Dorsolateral prefrontal cortex (tissue), 120 donors: ENCODE measurements at regions of chr10 and their contacts with region 1.

Region 1: GRCh38 chr10:100185364-100186252 is at the start of gene ERLIN1:
- DNase-seq: peak; percentile 75 to 94 (median 87)
- H3K4me3 ChIP-seq: peak within 1 kb of the TSS; percentile 61 to 100 (median 93)
- H3K27ac ChIP-seq: peak within 1 kb of the TSS in 57 of 59 donors; percentile 6 to 92 (median 78)
- H3K27me3 ChIP-seq: no peaks in the 10 kb centered on the region
- CTCF ChIP-seq: peak in 29 of 56 donors; percentile 5 to 56 (median 26)
- total RNA-seq, gene ERLIN1: 6.9 to 17.3 (median 10.6) TPM

Region 2: GRCh38 chr10:100229819-100230422 is 44.3 kb after region 1 on chr10:
- intact Hi-C with region 1: loop called in 1 of 2 experiments (anchors 1 kb)
- DNase-seq: no peak
- H3K4me3 ChIP-seq: peak overlapping the region; percentile 61 to 99 (median 90)
- H3K27ac ChIP-seq: peak overlapping the region in 56 of 59 donors; percentile 6 to 90 (median 75)
- H3K27me3 ChIP-seq: no peaks in the 10 kb centered on the region
- CTCF ChIP-seq: peak in 4 of 56 donors; percentile 0 to 4 (median 2)

Region 3: DNA sequence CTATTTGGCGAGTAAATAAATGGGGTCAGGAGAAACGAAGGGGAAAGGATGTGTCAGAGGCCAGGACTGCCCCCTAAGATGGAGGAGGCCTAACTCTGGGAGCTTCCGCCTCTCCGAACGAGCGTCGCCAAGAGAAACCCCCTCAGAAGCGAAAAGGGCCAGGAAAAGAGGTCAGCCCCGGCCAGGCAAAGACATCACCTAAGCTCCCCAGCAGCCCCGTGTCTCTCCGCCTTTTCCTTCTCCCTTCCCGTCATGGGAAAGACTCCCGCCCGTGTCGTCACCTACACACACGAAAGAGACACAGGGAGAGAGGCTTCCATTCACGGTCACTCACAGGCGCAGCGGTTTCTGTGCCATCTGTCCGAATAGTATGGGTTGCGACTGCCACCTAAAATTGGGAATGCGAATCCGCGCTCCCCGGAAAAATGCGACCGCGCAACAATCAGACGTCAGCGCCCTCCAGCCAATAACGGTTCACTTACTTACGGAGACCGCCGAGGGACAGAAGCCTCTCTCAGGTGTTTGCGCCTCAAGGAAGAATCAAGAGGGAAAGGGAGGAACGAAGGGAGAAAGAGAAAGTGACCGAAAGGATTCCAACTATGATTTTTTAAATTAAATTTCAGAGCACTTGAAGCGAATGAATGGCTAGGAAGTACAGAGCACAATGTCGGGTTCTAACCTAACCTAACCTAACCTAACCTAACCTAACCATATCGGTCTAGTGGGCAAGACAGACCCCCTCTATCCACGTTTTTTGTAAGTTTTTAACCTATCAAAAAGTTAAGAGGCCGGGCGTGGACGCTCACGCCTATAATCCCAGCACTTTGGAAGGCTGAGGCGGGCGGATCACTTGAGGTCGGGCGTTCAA is 81.9 kb after region 1 on chr10 and contains the start of gene CWF19L1:
- intact Hi-C with region 1: loop called (anchors 5 to 10 kb)
- DNase-seq: peak; percentile 75 to 92 (median 87)
- H3K4me3 ChIP-seq: peak within 1 kb of the TSS; percentile 67 to 100 (median 96)
- H3K27ac ChIP-seq: peak within 1 kb of the TSS in 56 of 59 donors; percentile 32 to 93 (median 74)
- H3K27me3 ChIP-seq: no peaks in the 10 kb centered on the region
- CTCF ChIP-seq: peak in 23 of 56 donors; percentile 8 to 48 (median 21)
- total RNA-seq, gene CWF19L1: 15.0 to 36.9 (median 24.6) TPM

Region 4: DNA sequence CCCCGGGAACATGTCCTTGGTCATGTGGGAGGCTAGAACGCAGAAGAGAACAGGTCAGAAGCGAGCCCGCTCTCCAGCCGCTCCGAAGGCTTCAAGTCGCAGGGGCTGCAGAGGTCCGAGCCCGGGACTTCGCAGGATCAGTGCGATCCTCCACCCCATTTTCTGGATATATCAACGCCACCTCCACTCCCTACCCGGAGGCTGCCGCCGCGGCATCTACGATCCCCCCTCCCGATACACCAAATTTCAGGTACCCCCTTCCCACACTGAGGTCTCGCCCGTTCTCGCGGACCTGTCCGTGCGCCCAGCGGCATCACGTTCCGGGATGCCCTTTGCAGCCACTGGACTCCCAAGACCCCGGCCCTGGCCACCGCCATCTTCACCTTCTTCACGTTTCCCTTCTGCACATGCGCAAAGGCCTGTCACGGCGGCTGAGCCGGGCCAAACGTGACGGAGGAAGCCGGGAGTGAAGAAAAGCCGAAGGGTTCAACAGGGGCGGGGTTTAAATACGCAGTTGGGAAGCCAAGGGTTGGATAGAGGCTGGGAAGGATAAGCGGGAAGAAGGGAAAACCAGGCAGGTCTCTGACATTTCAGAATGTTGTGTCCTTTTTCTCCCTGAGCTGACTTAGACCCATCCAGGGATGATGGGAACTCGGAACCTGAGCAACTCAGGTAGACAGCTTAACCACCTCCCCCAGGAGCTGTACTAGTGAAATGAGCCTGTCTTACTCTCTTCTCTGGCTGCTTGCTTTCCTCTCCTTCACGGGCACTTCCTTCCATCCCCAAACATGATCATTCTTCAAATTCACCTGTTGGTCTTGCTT is 344.1 kb after region 1 on chr10 and contains the start of gene NDUFB8:
- intact Hi-C with region 1: loop called in 1 of 2 experiments (anchors 10 kb)
- DNase-seq: peak; percentile 79 to 94 (median 90)
- H3K4me3 ChIP-seq: peak within 1 kb of the TSS; percentile 72 to 99 (median 92)
- H3K27ac ChIP-seq: peak within 1 kb of the TSS; percentile 42 to 94 (median 86)
- H3K27me3 ChIP-seq: no peaks in the 10 kb centered on the region
- CTCF ChIP-seq: peak in 37 of 56 donors; percentile 4 to 58 (median 32)
- total RNA-seq, gene NDUFB8: 219 to 414 (median 337) TPM